ENCODE measurements at regions of chr2 and their contacts with region 1.

Region 1: DNA sequence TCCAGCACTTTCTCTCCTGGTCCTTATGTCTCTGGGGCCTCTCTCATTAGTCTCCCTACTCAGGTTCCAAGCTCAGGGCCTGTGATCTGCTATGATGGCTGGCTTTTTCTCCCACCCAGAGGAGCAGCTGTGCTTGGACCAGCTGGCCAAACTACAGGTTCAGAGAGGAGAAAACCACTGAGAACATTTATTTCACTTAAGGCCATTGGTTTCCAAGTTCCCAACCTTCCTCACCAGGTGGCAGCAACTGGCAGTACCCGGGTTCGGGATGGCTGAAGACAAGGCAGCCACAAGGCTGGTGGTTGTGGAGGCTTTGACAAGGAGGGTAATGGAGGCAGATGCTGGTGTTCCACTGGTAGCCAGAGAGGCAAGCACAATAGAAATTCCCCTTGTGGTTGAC is 29.9 kb upstream of the SELENOI start:
- DNase-seq: no peak
- H3K4me3 ChIP-seq: no peak overlapping the region
- H3K27ac ChIP-seq: no peak overlapping the region
- H3K4me1 ChIP-seq: no peaks in the 10 kb centered on the region
- H3K27me3 ChIP-seq: no peaks in the 10 kb centered on the region
- CTCF ChIP-seq: no peak
- EP300 ChIP-seq: no peak
- POLR2A ChIP-seq: no peak

Region 2: GRCh38 chr2:26235085-26235484 is 81.0 kb before region 1 on chr2:
- intact Hi-C with region 1: loop called in 2 of 4 experiments (anchors 10 kb)
- DNase-seq: no peak
- H3K4me3 ChIP-seq: no peak overlapping the region
- H3K27ac ChIP-seq: no peak overlapping the region
- H3K4me1 ChIP-seq: no peaks in the 10 kb centered on the region
- H3K27me3 ChIP-seq: no peaks in the 10 kb centered on the region
- CTCF ChIP-seq: peak in 1 of 3 donors; percentile 28
- EP300 ChIP-seq: no peak
- POLR2A ChIP-seq: no peak

Measured in ovary (tissue), 10 donors.